ENCODE measurements at regions of chr19 and their contacts with region 1.

Region 1: DNA sequence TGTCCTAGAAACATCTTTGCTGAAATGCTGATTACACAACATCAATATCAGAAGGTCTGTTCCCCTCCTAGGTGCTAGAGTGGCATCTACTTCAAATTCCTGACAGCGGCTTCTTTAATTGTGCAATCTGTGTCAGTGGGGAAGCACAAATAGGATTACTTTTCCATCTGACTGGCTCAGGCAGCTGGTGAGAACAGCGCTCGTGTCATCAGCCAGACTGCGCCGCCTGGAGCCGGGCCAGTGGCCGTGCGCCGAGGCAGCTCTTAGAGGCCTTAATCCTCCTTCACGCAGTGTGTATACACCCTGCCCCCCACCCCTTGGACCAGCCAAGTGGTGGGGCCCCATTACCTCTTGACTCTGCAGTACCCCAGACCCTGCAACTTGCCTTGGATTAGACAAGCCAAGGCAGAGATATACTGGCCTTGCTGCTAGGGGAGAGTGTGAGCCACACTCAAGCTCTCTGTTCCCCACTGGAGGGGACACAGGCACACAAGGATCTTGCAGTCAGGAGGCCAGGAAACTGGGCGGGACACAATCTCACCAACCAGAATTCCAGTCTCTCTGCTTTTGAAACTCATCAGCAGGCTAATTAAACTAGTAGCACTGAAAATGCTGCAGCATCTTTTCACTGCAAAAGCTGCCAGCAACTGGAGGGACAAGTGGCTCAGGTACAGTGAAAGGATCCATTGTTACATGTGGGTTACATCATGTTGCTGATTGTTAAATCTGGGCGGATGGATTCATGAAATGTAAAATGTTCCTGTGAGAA is 48.9 kb upstream of the EPHX3 start:
- DNase-seq: peak; percentile 89
- ATAC-seq: peak; percentile 90 to 93

Region 2: GRCh38 chr19:15323496-15324227 is 42.6 kb after region 1 on chr19:
- intact Hi-C with region 1: loop called (anchors 5 to 10 kb)
- DNase-seq: peak; percentile 68
- ATAC-seq: peak; percentile 39 to 67

Region 3: GRCh38 chr19:15365264-15365663 is 84.2 kb after region 1 on chr19:
- intact Hi-C with region 1: loop called in 1 of 2 experiments (anchors 5 kb)
- DNase-seq: no peak
- ATAC-seq: no peak

Region 4: DNA sequence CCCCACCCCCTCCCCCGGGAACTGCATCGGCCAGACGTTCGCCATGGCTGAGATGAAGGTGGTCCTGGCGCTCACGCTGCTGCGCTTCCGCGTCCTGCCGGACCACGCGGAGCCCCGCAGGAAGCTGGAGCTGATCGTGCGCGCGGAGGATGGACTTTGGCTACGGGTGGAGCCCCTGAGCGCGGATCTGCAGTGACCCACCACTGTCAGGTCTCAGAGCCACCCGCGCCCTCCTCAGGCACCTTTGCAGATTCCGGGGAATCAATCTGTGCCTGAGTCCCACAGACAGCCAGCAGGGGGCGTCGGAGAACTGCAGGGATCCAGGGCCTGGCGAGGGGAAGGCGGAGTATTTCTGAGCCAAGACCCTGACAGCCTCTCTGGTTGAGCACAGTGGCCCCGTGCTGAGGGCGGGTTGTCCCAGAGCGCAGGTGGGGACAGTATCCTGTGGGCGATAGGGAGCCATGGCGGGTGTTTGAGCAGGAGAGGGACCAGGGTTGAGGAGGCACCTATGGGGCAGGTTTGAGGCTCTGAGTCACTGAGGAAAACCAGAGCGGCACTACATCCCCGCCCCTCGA is 303.5 kb after region 1 on chr19:
- intact Hi-C with region 1: no loop called
- DNase-seq: peak; percentile 80
- ATAC-seq: peak; percentile 72 to 77

Measured in left cardiac atrium (tissue), 4 donors.